ENCODE measurements at regions of chr9 and their contacts with region 1.

Region 1: GRCh38 chr9:126564711-126565110 is 49.0 kb upstream of the LMX1B start:
- DNase-seq: peak; percentile 22
- ATAC-seq: no peak
- H3K4me3 Mint-ChIP-seq: no peak overlapping the region
- H3K27ac Mint-ChIP-seq: no peak overlapping the region
- H3K4me1 Mint-ChIP-seq: no peaks in the 10 kb centered on the region
- H3K27me3 Mint-ChIP-seq: peaks cover 33% of the 10 kb centered on the region

Region 2: GRCh38 chr9:126301985-126302603 is 262.6 kb before region 1 on chr9:
- CTCF ChIA-PET with region 1: no interaction called
- POLR2A ChIA-PET with region 1: no interaction called
- intact Hi-C with region 1: loop called in 1 of 2 experiments (anchors 10 kb)
- DNase-seq: peak; percentile 69
- ATAC-seq: peak; percentile 65
- H3K4me3 Mint-ChIP-seq: no peak overlapping the region
- H3K27ac Mint-ChIP-seq: no peak overlapping the region
- H3K4me1 Mint-ChIP-seq: peaks cover 2% of the 10 kb centered on the region
- H3K27me3 Mint-ChIP-seq: no peaks in the 10 kb centered on the region

Region 3: GRCh38 chr9:126500684-126501382 is 63.9 kb before region 1 on chr9:
- CTCF ChIA-PET with region 1: interaction called, 140 read pairs
- POLR2A ChIA-PET with region 1: no interaction called
- intact Hi-C with region 1: no loop called
- DNase-seq: peak; percentile 83
- ATAC-seq: peak; percentile 87
- H3K4me3 Mint-ChIP-seq: no peak overlapping the region
- H3K27ac Mint-ChIP-seq: no peak overlapping the region
- H3K4me1 Mint-ChIP-seq: peaks cover 5% of the 10 kb centered on the region
- H3K27me3 Mint-ChIP-seq: peaks cover 8% of the 10 kb centered on the region

Measured in activated CD4-positive, alpha-beta T cell treated with anti-CD3 and anti-CD28 coated beads for 36 hours (primary cell).